ENCODE measurements at regions of chr10 and their contacts with region 1.

Region 1: GRCh38 chr10:50291261-50291850 is 40.0 kb upstream of the ASAH2 start:
- DNase-seq: no peak
- ATAC-seq: peak in 2 of 8 donors; percentile 55
- H3K4me3 ChIP-seq: no peak overlapping the region
- H3K27ac ChIP-seq: no peak overlapping the region
- H3K4me1 ChIP-seq: peaks cover 0 to 11% (median 4%) of the 10 kb centered on the region in 9 donors
- H3K27me3 ChIP-seq: no peaks in the 10 kb centered on the region
- CTCF ChIP-seq: peak in 7 of 9 donors; percentile 40 to 65 (median 54)

Region 2: DNA sequence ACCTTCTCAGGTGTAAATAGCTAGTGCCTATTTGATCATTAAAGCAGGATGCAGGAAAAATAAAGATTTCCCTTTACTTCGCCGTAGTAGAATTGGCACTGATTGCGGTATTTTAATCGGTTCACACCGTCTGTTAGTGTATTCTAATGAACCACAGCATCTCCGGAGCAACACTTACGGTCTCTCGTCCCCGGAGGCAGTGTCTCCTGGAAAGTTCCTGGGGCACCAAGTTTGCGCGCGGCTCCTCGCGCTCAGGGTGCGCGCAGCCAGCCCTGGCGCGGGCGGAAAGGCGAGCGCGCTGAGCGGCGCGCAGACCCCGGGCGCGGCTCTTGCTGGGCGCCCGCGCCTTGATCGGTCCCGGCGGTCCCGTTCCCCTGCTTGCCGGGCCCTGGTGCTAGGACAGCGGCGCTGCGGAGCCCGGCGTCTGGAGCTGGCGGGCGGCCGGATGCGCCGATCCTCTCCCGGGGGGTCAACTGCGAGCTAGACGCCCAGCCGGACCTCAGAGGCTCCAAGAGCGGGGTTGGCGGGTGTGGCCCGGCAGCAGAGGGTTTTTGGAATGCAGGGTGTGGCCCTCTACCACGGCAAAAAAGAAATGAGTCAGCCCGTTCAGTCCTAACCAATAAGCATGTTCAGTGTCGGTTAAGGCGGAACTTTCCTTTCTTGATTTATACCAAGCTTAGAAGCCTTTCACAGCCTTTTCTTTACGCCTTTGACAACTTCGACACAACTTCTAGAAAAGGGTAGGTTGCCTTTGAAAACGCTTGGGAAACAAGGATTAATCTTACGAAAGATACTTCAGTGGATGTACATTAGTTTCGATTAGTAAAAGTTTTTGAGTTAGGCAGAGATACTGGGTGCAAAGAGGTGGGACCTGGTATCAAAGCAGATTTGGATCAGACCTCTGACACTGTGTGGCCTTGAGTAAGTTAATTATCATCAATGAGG is 126.8 kb after region 1 on chr10:
- intact Hi-C with region 1: loop called in 2 of 10 experiments (anchors 5 to 10 kb)
- DNase-seq: peak; percentile 70 to 79
- ATAC-seq: peak; percentile 86 to 97 (median 92)
- H3K4me3 ChIP-seq: peak overlapping the region; percentile 44 to 80 (median 68)
- H3K27ac ChIP-seq: peak overlapping the region; percentile 34 to 91 (median 82)
- H3K4me1 ChIP-seq: peaks cover 0 to 82% (median 35%) of the 10 kb centered on the region in 9 donors
- H3K27me3 ChIP-seq: no peaks in the 10 kb centered on the region
- CTCF ChIP-seq: peak in 2 of 9 donors; percentile 21 to 29

Region 3: DNA sequence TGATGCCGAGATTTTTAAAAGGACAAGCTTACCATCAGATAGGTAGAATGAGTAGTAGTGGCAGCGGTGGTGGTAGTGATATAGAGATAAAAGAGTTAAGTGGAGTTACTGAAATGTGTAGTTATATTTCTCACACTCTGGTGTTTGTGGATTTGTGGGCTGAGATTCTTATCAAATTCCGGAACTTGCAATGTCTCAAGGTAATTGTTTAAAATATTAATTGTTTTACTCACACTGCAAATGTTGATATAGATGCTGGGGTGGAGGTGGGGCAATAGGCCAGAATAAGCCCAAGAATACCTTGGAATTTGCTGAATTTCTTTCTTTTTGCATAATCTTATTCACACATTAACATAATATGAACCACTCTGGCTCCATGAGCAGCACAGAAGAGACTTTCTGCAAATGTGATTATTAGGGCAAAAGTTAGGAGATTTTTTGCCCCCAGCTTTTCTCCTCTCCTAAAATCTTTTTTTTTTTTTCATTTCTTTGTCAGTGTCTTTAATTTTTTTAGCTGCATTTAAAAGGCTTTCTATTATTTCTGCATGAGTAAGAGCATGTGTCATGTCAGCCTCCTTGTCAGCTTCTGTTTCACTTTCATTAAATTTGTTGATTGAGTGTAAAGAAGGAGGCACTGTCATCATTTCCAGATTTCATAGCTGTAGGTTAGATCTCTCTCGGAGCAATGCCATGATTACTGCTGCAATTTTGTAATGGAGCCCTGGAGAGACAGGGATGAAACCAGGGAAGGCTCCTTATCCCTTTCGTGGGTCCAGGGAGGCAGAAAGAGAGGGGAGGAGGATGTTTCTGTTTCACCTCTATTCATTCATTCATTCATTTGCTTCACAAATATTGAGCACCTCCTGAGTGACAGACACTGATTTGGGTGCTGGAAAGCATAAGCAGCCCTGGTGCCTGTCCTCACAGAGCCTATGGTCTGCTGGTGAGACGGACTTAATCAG is 345.5 kb after region 1 on chr10:
- intact Hi-C with region 1: loop called in 2 of 10 experiments (anchors 10 kb)
- DNase-seq: no peak
- ATAC-seq: no peak
- H3K4me3 ChIP-seq: no peak overlapping the region
- H3K27ac ChIP-seq: no peak overlapping the region
- H3K4me1 ChIP-seq: peaks cover 0 to 11% (median 0%) of the 10 kb centered on the region in 9 donors
- H3K27me3 ChIP-seq: no peaks in the 10 kb centered on the region
- CTCF ChIP-seq: no peak

Region 4: DNA sequence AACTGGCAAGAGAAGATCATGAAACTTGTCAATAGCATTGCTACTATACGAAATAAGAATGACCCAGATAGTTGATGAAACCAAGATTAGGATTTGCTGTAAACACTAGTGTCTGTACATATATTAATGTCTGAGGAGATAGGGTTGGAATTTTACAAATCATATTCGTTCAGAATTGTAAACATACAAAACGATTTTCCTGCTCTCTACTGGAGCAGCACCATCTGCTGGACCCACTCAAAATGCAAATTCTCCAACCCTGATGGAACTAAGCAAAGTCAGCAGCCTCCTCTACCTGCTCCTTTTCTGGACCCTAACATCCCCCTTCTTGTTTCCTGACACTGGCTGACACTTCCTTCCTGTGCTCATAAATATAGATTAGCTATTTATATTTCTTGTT is 361.8 kb after region 1 on chr10:
- intact Hi-C with region 1: loop called in 2 of 10 experiments (anchors 5 to 10 kb)
- DNase-seq: no peak
- ATAC-seq: peak in 7 of 8 donors; percentile 49 to 74 (median 63)
- H3K4me3 ChIP-seq: no peak overlapping the region
- H3K27ac ChIP-seq: no peak overlapping the region
- H3K4me1 ChIP-seq: peaks cover 0 to 16% (median 6%) of the 10 kb centered on the region in 9 donors
- H3K27me3 ChIP-seq: no peaks in the 10 kb centered on the region
- CTCF ChIP-seq: peak; percentile 28 to 74 (median 59)